Left ventricle myocardium superior (tissue), 1 donor: ENCODE measurements at regions of chr15 and their contacts with region 1.

Region 1: GRCh38 chr15:77496710-77497103 is 76.0 kb downstream of the HMG20A start:
- DNase-seq: peak; percentile 93
- ATAC-seq: peak; percentile 79

Region 2: DNA sequence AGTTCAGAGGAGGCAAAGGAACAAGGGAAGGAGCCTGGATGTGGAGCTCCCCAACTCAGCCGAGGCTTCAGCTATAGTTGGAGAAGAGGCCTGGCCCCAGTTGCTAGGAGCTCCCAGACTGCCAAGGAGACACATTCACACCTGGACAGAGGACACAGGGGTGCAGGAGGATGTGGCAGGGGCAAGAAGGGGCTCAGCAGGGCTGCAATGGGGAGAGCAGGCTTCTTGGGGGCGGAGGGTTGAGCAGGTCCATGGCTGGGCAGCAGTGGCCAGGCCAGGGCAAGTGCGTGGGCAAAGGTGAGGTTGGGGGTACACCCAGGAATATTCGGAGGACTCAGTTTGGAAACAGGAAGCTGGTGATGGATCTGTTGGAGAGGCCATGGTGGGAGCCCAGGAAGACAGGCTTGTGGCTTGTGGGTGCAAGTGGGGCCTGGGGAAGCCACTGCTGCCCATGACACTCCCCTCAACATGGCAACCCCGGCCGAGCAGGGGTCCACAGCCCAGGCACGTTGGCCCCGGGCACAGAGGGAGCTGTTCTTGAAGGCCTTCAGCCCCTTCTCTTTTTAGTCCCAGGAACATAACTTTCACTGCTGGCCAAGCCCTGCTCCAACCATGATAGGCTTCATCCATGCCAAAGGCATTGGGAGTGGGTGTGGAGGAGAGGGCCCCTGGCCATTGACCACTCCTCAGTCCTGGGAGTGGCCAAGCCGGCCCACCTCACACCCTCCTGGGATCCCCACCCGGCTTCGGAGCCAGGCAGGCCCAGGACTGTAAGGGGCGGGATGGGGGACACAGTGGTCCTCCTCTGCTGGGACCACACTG is 459.1 kb before region 1 on chr15:
- intact Hi-C with region 1: no loop called
- DNase-seq: peak; percentile 20
- ATAC-seq: no peak

Region 3: GRCh38 chr15:77186594-77187011 is 310.1 kb before region 1 on chr15:
- intact Hi-C with region 1: loop called (anchors 5 kb)
- DNase-seq: no peak
- ATAC-seq: peak; percentile 45